ENCODE measurements at regions of chr20 and their contacts with region 1.

Region 1: GRCh38 chr20:4167261-4168021 is 152.1 kb upstream of the RNF24 start:
- DNase-seq: no peak
- H3K4me3 ChIP-seq: no peak overlapping the region
- H3K27ac ChIP-seq: no peak overlapping the region
- H3K27me3 ChIP-seq: no peaks in the 10 kb centered on the region
- CTCF ChIP-seq: no peak

Region 2: DNA sequence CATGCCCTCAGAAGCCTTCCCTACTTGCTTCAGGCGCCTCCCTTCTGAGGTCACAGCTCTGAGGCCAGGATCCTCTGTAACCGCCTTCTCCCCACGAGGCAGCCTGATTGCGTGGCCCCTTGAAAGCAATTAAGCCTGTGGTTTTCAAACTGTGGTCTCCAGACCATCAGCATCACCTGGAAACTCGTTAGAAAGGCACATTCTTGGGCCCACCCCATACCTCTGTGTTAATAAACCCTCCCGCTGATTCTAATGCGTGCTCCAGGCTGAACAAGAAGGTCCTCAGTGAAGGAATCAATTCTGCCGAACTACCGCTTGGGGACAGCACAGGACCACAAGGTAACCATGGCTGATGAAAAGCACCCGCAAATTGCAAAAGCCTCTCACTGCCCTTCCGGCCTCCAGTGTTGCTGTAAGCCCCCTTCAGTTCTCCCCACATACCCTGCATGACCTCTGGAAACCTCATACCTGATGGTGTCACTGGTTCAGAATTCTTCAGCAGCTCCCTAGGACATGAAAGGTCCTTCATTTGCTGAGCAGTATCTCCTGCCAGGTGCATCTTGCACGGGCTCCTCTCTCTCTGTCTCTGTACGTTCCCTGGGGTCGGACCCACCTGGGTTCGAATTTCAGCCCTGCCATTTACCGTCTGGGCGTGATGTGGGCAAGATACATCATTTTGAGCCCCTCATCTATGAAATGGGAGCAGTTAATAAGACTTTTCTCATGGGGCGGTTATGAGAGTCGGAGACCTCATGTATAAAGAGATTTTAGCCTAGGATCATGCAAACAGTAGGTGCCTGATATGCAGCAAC is 58.7 kb before region 1 on chr20:
- CTCF ChIA-PET with region 1: interaction called, 11 read pairs
- POLR2A ChIA-PET with region 1: interaction called, 3 read pairs
- DNase-seq: peak; percentile 76
- H3K4me3 ChIP-seq: no peak overlapping the region
- H3K27ac ChIP-seq: no peak overlapping the region
- H3K27me3 ChIP-seq: no peaks in the 10 kb centered on the region
- CTCF ChIP-seq: peak; percentile 100

Region 3: GRCh38 chr20:4180356-4180755 is 12.9 kb after region 1 on chr20:
- CTCF ChIA-PET with region 1: no interaction called
- POLR2A ChIA-PET with region 1: no interaction called
- DNase-seq: no peak
- H3K4me3 ChIP-seq: no peak overlapping the region
- H3K27ac ChIP-seq: no peak overlapping the region
- H3K27me3 ChIP-seq: no peaks in the 10 kb centered on the region
- CTCF ChIP-seq: no peak

Measured in AG04450 (cell line).